Stomach (tissue), 19 donors: ENCODE measurements at regions of chr5 and their contacts with region 1.

Region 1: DNA sequence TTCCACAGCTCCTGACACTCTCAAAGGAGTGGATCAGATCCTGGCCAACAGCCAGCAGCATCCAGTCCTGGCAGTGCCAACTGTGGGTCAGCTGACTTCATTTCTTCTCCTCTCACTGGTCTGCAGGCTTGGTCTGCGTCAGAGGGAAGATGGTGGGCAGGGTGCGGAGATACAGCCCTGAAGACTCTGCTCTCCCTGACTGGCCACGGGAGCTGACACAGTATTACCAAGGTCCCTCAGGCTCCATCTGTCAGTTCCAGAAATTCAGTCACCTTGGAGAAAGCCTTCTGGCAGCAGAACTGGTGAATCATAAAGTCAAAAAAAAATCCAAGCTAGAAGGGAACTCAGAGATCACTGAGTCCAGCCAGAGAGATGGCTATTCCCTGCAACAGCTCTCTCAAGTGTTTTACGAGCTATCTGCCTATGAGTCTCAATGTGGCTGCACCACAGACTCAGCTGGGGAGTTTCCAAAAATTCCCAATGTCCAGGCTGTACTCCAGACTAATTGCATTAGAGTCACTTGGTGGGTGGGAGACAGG is 28.0 kb downstream of the C1QTNF2 start:
- DNase-seq: peak; percentile 39 to 48
- H3K4me3 ChIP-seq: no peak overlapping the region
- H3K27ac ChIP-seq: peak overlapping the region in 3 of 5 donors; percentile 11 to 46 (median 24)
- H3K4me1 ChIP-seq: peaks cover 4 to 9% (median 8%) of the 10 kb centered on the region in 4 donors
- H3K27me3 ChIP-seq: peaks cover 0 to 4% (median 0%) of the 10 kb centered on the region in 3 donors
- CTCF ChIP-seq: no peak
- EP300 ChIP-seq: no peak
- POLR2A ChIP-seq: no peak

Region 2: GRCh38 chr5:159965031-159965837 is 377.2 kb before region 1 on chr5:
- intact Hi-C with region 1: no loop called
- DNase-seq: peak; percentile 55 to 79
- H3K4me3 ChIP-seq: no peak overlapping the region
- H3K27ac ChIP-seq: no peak overlapping the region
- H3K4me1 ChIP-seq: no peaks in the 10 kb centered on the region
- H3K27me3 ChIP-seq: peaks cover 0 to 41% (median 0%) of the 10 kb centered on the region in 3 donors
- CTCF ChIP-seq: peak in 4 of 7 experiments; percentile 25 to 47 (median 42)
- EP300 ChIP-seq: no peak
- POLR2A ChIP-seq: no peak

Region 3: DNA sequence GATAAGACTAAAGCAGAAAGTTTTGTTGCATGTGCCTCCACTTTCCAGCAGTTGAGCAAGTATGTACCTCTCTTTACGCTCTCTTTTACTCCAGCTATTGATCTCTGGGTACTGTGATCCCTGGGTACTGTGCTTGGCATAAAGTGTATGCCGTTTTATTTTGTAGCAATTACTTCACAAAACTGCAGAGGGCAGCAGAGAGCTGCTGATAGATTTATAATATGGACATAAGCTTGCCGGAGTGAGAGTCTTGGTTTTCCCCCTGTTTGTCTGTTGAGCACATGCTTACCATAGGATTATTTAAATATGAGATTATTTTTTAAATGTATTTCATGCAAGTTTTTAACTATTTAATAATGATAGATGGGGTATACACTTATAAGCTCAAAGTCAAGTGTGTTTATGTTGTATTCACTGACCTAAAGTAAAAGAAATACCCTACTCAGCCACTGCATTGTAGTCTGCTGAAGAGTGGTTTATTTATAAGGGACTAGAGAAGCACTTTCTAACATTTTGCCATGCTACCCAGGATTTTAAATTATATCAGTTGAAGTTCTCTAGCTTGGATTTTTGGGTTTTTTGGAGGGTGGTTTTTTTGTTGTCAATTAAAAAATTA is 320.5 kb before region 1 on chr5:
- intact Hi-C with region 1: loop called (anchors 10 kb)
- DNase-seq: peak; percentile 44 to 90
- H3K4me3 ChIP-seq: no peak overlapping the region
- H3K27ac ChIP-seq: peak overlapping the region in 3 of 5 donors; percentile 28 to 46 (median 28)
- H3K4me1 ChIP-seq: peaks cover 8 to 39% (median 17%) of the 10 kb centered on the region in 4 donors
- H3K27me3 ChIP-seq: no peaks in the 10 kb centered on the region
- CTCF ChIP-seq: peak in 5 of 7 experiments; percentile 64 to 85 (median 78)
- EP300 ChIP-seq: no peak
- POLR2A ChIP-seq: no peak

Region 4: DNA sequence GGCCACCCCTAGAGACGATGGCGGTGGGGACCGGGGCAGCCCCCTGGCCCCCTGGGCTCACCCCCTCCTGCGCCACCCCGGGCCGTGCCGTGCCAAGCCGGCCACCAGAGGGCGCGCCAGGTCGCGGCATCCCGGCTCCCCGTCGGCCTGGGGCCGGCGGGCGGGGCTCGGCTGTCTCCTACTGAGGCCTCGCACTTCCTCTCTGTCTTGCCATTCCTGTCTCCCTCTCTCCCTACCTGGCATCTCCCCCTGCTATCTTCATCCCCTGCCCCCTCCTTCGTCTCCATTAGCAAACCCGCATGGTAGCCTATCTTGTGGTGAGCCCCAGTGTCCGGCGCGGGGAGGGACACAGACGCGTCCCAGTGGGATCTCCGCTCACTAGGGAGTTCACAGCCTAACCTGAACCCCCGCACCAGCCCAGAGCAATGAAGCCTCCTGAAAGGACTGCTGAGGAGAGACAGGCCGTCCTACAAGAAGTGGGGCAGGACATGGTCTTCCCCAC is 143.0 kb before region 1 on chr5:
- intact Hi-C with region 1: loop called (anchors 5 kb)
- DNase-seq: peak; percentile 79 to 89
- H3K4me3 ChIP-seq: peak overlapping the region; percentile 42 to 46 (median 44)
- H3K27ac ChIP-seq: no peak overlapping the region
- H3K4me1 ChIP-seq: peaks cover 0 to 15% (median 10%) of the 10 kb centered on the region in 4 donors
- H3K27me3 ChIP-seq: peaks cover 0 to 18% (median 0%) of the 10 kb centered on the region in 3 donors
- CTCF ChIP-seq: peak in 5 of 7 experiments; percentile 48 to 98 (median 89)
- EP300 ChIP-seq: no peak
- POLR2A ChIP-seq: no peak